Naive thymus-derived CD8-positive, alpha-beta T cell (primary cell): ENCODE measurements at regions of chr16 and their contacts with region 1.

Region 1: GRCh38 chr16:31269487-31269886 is 9.7 kb downstream of the ITGAM start:
- DNase-seq: no peak
- ATAC-seq: no peak
- H3K4me3 Mint-ChIP-seq: no peak overlapping the region
- H3K27ac Mint-ChIP-seq: no peak overlapping the region
- H3K4me1 Mint-ChIP-seq: peaks cover 5 to 24% (median 9%) of the 10 kb centered on the region in 4 donors
- H3K27me3 Mint-ChIP-seq: peaks cover 0 to 9% (median 8%) of the 10 kb centered on the region in 5 donors

Region 2: GRCh38 chr16:31561426-31562233 is 292.1 kb after region 1 on chr16:
- POLR2A ChIA-PET with region 1: interaction called, 14 read pairs
- DNase-seq: no peak
- ATAC-seq: no peak
- H3K4me3 Mint-ChIP-seq: no peak overlapping the region
- H3K27ac Mint-ChIP-seq: no peak overlapping the region
- H3K4me1 Mint-ChIP-seq: no peaks in the 10 kb centered on the region
- H3K27me3 Mint-ChIP-seq: peaks cover 14 to 37% (median 22%) of the 10 kb centered on the region in 5 donors